Endothelial cell of umbilical vein (primary cell): ENCODE measurements at regions of chr7 and their contacts with region 1.

Region 1: GRCh38 chr7:138886501-138886917 is 88.5 kb upstream of the ATP6V0A4 start:
- DNase-seq: peak; percentile 84
- H3K4me3 ChIP-seq: no peak overlapping the region
- H3K27ac ChIP-seq: no peak overlapping the region
- H3K4me1 ChIP-seq: no peaks in the 10 kb centered on the region
- H3K27me3 ChIP-seq: no peaks in the 10 kb centered on the region
- CTCF ChIP-seq: peak; percentile 45 to 52
- POLR2A ChIP-seq: no peak

Region 2: DNA sequence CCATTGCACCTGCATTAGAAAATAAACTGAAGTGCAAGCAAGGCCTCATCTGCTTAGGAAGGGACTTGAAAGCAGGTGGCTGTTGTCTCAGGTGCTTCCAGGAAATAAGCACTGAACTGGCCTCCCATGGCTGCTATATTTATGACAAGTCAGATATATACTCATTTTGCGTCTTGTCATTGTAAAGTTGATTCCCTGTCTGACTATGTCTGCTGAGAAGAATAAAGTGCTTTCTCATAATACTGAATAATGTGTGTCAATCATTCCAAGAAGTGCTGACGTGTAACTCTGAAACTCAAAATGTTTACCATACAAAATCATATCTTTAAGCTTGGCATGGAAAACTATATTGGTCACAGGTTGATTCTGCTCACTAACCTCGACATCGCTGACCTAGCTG is 140.4 kb before region 1 on chr7:
- CTCF ChIA-PET with region 1: no interaction called
- POLR2A ChIA-PET with region 1: no interaction called
- dilution Hi-C with region 1: no loop called
- intact Hi-C with region 1: no loop called
- DNase-seq: no peak
- H3K4me3 ChIP-seq: no peak overlapping the region
- H3K27ac ChIP-seq: no peak overlapping the region
- H3K4me1 ChIP-seq: no peaks in the 10 kb centered on the region
- H3K27me3 ChIP-seq: no peaks in the 10 kb centered on the region
- CTCF ChIP-seq: no peak
- POLR2A ChIP-seq: no peak

Region 3: GRCh38 chr7:138843632-138844580 is 42.6 kb before region 1 on chr7:
- CTCF ChIA-PET with region 1: no interaction called
- POLR2A ChIA-PET with region 1: no interaction called
- dilution Hi-C with region 1: no loop called
- intact Hi-C with region 1: no loop called
- DNase-seq: no peak
- H3K4me3 ChIP-seq: no peak overlapping the region
- H3K27ac ChIP-seq: no peak overlapping the region
- H3K4me1 ChIP-seq: no peaks in the 10 kb centered on the region
- H3K27me3 ChIP-seq: no peaks in the 10 kb centered on the region
- CTCF ChIP-seq: no peak
- POLR2A ChIP-seq: no peak

Region 4: DNA sequence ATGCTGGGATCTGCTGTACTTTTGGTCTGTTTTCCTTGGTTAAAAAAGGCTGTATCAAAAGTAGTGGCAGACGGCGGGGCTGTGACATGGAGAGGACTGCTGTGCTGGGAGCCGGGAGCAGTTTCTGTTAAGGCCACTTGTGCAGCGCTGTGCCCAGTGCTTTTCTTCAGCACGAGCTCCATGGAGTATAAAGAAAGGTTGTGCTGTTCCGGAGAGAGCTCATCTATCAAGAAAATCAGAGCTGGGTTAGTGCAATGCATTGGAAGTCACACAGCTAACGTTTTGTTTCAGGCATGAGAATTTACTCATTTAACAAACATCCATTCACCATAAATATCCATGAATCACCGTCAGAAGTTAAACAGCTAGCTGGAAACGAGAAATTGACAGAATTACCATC is 32.7 kb after region 1 on chr7:
- CTCF ChIA-PET with region 1: interaction called, 13 read pairs
- POLR2A ChIA-PET with region 1: no interaction called
- dilution Hi-C with region 1: no loop called
- intact Hi-C with region 1: no loop called
- DNase-seq: no peak
- H3K4me3 ChIP-seq: no peak overlapping the region
- H3K27ac ChIP-seq: no peak overlapping the region
- H3K4me1 ChIP-seq: no peaks in the 10 kb centered on the region
- H3K27me3 ChIP-seq: no peaks in the 10 kb centered on the region
- CTCF ChIP-seq: no peak
- POLR2A ChIP-seq: no peak

Region 5: DNA sequence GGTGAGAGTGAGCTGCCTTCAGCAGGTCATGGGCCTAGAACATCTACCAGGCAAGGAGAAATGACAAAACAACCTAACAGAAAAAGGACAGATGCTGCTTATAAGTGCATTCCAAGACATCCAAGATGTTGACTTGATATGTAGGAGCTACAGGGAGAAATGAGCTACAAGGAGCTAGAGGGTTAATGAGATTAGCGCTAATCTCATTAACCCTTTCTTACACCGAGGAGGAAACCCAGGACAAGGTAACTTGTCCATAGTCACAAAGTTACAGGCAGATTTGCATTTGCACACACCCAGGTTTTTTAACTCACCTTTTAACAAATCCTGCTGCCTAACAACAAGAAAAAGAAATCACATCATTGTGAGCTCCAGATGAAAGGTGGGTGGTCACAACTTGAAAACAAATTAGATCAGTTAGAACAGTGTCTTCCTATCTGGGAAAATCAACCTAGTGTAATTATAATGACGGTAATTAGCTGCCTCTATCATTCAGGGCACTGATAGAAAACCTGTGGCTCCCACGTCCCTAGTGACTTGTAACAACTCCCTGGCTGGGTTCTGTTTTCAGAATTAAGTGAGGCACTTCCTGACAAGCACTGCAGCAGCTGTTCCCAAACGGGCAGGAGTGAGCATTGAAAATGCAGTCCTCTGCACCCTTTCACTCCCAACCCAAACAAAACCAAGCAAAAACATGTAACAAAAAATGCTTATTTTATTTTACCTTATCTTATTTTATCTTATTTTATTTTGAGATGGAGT is 89.0 kb after region 1 on chr7:
- CTCF ChIA-PET with region 1: interaction called, 117 read pairs
- POLR2A ChIA-PET with region 1: no interaction called
- dilution Hi-C with region 1: no loop called
- intact Hi-C with region 1: no loop called
- DNase-seq: no peak
- H3K4me3 ChIP-seq: no peak overlapping the region
- H3K27ac ChIP-seq: no peak overlapping the region
- H3K4me1 ChIP-seq: peaks cover 20% of the 10 kb centered on the region
- H3K27me3 ChIP-seq: no peaks in the 10 kb centered on the region
- CTCF ChIP-seq: no peak
- POLR2A ChIP-seq: no peak

Region 6: GRCh38 chr7:139016931-139017511 is 130.5 kb after region 1 on chr7:
- CTCF ChIA-PET with region 1: interaction called, 45 read pairs
- POLR2A ChIA-PET with region 1: no interaction called
- dilution Hi-C with region 1: no loop called
- intact Hi-C with region 1: loop called (anchors 1 kb)
- DNase-seq: peak; percentile 71
- H3K4me3 ChIP-seq: no peak overlapping the region
- H3K27ac ChIP-seq: no peak overlapping the region
- H3K4me1 ChIP-seq: no peaks in the 10 kb centered on the region
- H3K27me3 ChIP-seq: no peaks in the 10 kb centered on the region
- CTCF ChIP-seq: peak; percentile 64 to 65
- POLR2A ChIP-seq: no peak

Region 7: DNA sequence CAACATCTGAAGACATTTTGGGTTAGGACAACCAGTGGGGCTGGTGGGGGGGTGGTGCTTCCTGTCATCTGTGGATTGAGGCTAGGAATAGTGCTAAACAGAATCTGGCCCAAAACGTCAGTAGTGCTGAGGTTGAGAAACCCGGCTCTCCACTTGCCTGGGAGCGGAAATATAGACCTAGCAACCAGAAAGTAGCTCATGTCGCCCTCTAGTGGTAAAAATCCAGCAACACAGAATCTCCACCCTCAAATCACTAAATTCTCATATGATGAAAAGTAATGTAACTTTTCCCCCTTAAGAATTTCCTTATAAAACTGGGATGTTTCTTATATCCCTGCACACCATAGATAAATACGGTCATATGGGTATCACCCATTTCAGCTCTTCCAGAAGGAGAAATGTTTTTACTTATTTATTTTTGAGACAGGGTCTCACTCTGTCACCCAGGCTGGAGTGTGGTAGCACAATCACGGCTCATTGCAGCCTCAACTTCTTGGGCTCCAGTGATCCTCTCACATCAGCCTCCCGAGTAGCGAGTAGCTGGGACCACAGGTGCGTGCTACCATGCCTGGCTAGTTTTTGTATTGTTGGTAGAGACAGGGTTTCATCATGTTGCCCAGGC is 188.6 kb after region 1 on chr7:
- CTCF ChIA-PET with region 1: interaction called, 106 read pairs
- POLR2A ChIA-PET with region 1: interaction called, 3 read pairs
- dilution Hi-C with region 1: no loop called
- intact Hi-C with region 1: loop called (anchors 1 kb)
- DNase-seq: peak; percentile 81
- H3K4me3 ChIP-seq: no peak overlapping the region
- H3K27ac ChIP-seq: peak overlapping the region; percentile 61
- H3K4me1 ChIP-seq: peaks cover 7% of the 10 kb centered on the region
- H3K27me3 ChIP-seq: no peaks in the 10 kb centered on the region
- CTCF ChIP-seq: peak; percentile 65 to 74
- POLR2A ChIP-seq: no peak

Region 8: DNA sequence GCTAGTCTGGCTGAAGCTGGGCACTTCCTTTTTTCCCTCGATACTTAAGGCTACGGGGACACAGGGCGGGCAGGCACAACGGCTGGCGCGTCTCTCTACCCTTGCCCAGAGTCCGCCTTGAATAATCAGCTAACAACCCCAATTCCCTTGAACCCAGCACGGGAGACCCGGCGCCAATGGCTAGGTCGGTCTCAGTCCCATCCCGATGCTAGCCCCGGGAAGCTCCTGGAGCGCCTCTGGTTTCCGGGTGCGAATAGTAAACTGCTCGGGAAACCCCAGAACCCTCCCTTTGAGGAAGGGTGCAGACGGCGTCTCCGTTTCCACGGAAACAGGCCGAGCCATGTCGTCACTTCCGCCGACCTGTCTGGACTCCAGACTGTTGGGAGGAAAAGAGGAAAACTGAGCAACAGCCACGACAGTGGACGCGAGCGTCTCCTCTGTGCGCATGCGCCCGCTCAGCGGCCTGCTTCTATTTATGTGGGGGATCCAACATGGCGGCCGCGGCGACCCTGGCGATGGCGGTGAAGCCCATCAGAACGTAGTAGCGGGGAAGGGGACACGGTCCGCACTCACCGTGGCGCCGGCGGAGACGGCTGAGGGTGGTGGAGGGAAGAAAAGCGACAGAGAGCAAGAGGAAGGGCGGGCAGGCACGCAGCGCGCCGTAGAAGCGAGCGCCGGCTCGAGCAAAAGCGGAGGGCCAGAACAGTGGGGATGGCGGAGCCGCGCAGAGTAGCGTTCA is 344.4 kb after region 1 on chr7 and contains the start of gene UBN2:
- CTCF ChIA-PET with region 1: interaction called, 3 read pairs
- POLR2A ChIA-PET with region 1: no interaction called
- dilution Hi-C with region 1: no loop called
- intact Hi-C with region 1: loop called (anchors 5 kb)
- DNase-seq: peak; percentile 99
- H3K4me3 ChIP-seq: peak within 1 kb of the TSS; percentile 35 to 72 (median 67)
- H3K27ac ChIP-seq: peak within 1 kb of the TSS; percentile 67
- H3K4me1 ChIP-seq: peaks cover 16% of the 10 kb centered on the region
- H3K27me3 ChIP-seq: no peaks in the 10 kb centered on the region
- CTCF ChIP-seq: no peak
- POLR2A ChIP-seq: peak; percentile 83
- total RNA-seq, gene UBN2: 11.8 and 14.2 TPM in 2 replicates

Region 9: DNA sequence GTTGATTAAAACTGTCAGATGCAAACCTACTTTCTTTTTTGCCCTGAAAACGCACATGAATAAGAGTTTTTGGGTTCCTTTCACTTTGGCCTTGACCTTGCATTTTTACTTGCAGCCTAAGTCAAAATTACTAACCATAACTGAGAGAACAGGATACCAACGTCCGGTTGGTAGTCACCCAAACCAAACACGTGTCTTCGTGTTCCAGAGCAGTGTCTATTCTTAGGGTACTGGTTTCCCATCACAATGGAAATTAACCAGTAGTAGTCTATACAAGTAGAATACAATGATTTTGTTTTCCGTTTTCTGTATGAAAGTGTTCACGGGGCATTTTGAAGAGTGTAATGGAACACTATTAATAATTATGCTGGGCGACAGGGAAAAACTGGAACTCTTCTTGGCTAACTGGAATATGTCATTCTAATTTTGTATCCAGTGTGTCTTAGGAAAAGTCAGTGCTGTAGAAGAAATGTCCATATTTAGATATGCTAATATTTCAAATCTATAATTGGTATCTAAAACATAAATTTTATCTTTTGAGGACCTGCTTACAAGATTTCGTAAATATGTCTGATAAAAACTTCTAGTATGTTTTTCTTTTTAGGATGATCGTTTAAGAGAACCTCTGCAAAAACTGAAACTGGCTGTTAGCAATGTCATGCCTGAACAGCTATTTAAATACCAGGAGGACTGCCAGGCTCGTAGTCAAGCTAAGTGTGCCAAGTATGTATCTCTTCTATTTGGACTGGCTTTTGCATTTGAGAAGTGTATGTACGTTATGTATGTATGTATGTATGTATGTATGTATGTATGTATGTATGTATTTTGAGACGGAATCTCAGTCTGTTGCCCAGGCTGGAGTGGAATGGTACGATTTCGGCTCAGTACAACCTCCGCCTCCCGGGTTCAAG is 385.5 kb after region 1 on chr7:
- CTCF ChIA-PET with region 1: no interaction called
- POLR2A ChIA-PET with region 1: no interaction called
- dilution Hi-C with region 1: no loop called
- intact Hi-C with region 1: no loop called
- DNase-seq: no peak
- H3K4me3 ChIP-seq: no peak overlapping the region
- H3K27ac ChIP-seq: no peak overlapping the region
- H3K4me1 ChIP-seq: no peaks in the 10 kb centered on the region
- H3K27me3 ChIP-seq: no peaks in the 10 kb centered on the region
- CTCF ChIP-seq: no peak
- POLR2A ChIP-seq: no peak